Panc1 (cell line): ENCODE measurements at regions of chr2 and their contacts with region 1.

Region 1: GRCh38 chr2:110816404-110817365 is 84.3 kb downstream of the ACOXL start:
- DNase-seq: peak; percentile 62
- ATAC-seq: no peak; the same call in 1 of the 2 replicates
- H3K4me3 ChIP-seq: no peak overlapping the region
- H3K27ac ChIP-seq: no peak overlapping the region
- H3K4me1 ChIP-seq: no peaks in the 10 kb centered on the region
- H3K27me3 ChIP-seq: no peaks in the 10 kb centered on the region
- CTCF ChIP-seq: no peak

Region 2: DNA sequence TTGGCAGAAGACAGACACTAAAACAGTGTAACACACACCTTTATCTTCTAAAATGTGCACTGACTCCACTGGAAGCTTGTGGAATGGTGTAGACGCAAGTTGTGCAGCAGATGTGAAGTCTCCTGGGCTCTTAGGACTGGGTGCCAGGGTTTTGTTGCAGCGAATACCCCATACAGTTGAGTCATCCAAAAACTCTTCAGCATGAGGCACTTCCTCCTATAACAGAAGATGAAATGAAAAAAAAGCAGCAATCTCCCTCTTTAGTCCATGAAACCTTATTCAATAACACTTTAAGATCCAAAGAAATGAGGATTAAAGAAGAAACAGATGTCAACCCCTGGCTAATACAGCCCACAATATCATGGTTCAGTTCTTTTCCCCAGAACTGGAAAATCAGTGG is 161.0 kb before region 1 on chr2:
- CTCF ChIA-PET with region 1: interaction called, 10 read pairs
- POLR2A ChIA-PET with region 1: no interaction called
- in situ Hi-C with region 1: no loop called
- intact Hi-C with region 1: no loop called
- DNase-seq: no peak
- ATAC-seq: no peak
- H3K4me3 ChIP-seq: no peak overlapping the region
- H3K27ac ChIP-seq: no peak overlapping the region
- H3K4me1 ChIP-seq: no peaks in the 10 kb centered on the region
- H3K27me3 ChIP-seq: no peaks in the 10 kb centered on the region
- CTCF ChIP-seq: no peak

Region 3: DNA sequence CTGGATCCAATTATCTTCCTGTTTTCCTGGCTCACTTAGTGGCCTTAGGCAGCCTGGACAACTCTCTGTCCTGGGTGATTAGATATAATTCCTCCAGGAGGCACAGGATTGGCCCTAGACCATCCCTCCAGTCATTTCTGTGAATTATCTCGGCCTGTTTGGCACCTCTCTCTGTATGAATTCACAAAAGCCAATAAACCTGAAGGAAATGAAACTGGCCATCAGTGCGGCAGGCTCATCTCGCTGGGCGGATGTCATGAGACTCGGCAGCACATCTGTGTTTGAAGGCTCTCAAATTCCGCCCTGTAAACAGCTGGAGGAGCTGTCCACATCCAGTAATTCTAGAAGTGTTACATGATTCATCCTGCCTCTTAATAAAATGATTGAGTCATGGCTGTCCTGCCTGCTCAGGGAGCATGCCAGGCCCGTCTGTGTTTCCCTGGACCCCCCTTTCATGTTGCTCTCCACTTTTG is 45.7 kb before region 1 on chr2:
- CTCF ChIA-PET with region 1: no interaction called
- POLR2A ChIA-PET with region 1: no interaction called
- in situ Hi-C with region 1: no loop called
- intact Hi-C with region 1: no loop called
- DNase-seq: no peak
- ATAC-seq: peak; percentile 56
- H3K4me3 ChIP-seq: no peak overlapping the region
- H3K27ac ChIP-seq: no peak overlapping the region
- H3K4me1 ChIP-seq: 0 out of 2 replicates have a peak, but pooled peaks cover 3% of the 10 kb centered on the region
- H3K27me3 ChIP-seq: no peaks in the 10 kb centered on the region; the same call in 1 of the 2 replicates
- CTCF ChIP-seq: no peak

Region 4: GRCh38 chr2:111111101-111111755 is 294.5 kb after region 1 on chr2:
- CTCF ChIA-PET with region 1: no interaction called
- POLR2A ChIA-PET with region 1: no interaction called
- in situ Hi-C with region 1: no loop called
- intact Hi-C with region 1: loop called (anchors 5 kb)
- DNase-seq: no peak
- ATAC-seq: no peak
- H3K4me3 ChIP-seq: no peak overlapping the region
- H3K27ac ChIP-seq: no peak overlapping the region
- H3K4me1 ChIP-seq: no peaks in the 10 kb centered on the region
- H3K27me3 ChIP-seq: no peaks in the 10 kb centered on the region; the same call in 1 of the 2 replicates
- CTCF ChIP-seq: no peak